Activated B cell treated with CpG ODN at 0.5 μM for 24 hours (primary cell): ENCODE measurements at regions of chr18 and their contacts with region 1.

Region 1: GRCh38 chr18:63284827-63285733 is 34.5 kb downstream of the BCL2 start:
- DNase-seq: peak; percentile 28
- ATAC-seq: peak; percentile 86
- H3K4me3 Mint-ChIP-seq: peak overlapping the region; percentile 81
- H3K27ac Mint-ChIP-seq: no peak overlapping the region
- H3K4me1 Mint-ChIP-seq: peaks cover 21% of the 10 kb centered on the region
- H3K27me3 Mint-ChIP-seq: no peaks in the 10 kb centered on the region
- CTCF ChIP-seq: no peak

Region 2: GRCh38 chr18:62460851-62461300 is 824.2 kb before region 1 on chr18:
- CTCF ChIA-PET with region 1: no interaction called
- POLR2A ChIA-PET with region 1: no interaction called
- intact Hi-C with region 1: no loop called
- DNase-seq: no peak
- ATAC-seq: no peak
- H3K4me3 Mint-ChIP-seq: no peak overlapping the region
- H3K27ac Mint-ChIP-seq: no peak overlapping the region
- H3K4me1 Mint-ChIP-seq: no peaks in the 10 kb centered on the region
- H3K27me3 Mint-ChIP-seq: no peaks in the 10 kb centered on the region
- CTCF ChIP-seq: no peak

Region 3: GRCh38 chr18:63273222-63273927 is 11.7 kb before region 1 on chr18:
- CTCF ChIA-PET with region 1: no interaction called
- POLR2A ChIA-PET with region 1: interaction called, 3 read pairs
- intact Hi-C with region 1: loop called (anchors 1 kb)
- DNase-seq: no peak
- ATAC-seq: peak; percentile 68
- H3K4me3 Mint-ChIP-seq: no peak overlapping the region
- H3K27ac Mint-ChIP-seq: peak overlapping the region; percentile 42
- H3K4me1 Mint-ChIP-seq: peaks cover 67% of the 10 kb centered on the region
- H3K27me3 Mint-ChIP-seq: no peaks in the 10 kb centered on the region
- CTCF ChIP-seq: no peak